ENCODE measurements at regions of chr6 and their contacts with region 1.

Region 1: DNA sequence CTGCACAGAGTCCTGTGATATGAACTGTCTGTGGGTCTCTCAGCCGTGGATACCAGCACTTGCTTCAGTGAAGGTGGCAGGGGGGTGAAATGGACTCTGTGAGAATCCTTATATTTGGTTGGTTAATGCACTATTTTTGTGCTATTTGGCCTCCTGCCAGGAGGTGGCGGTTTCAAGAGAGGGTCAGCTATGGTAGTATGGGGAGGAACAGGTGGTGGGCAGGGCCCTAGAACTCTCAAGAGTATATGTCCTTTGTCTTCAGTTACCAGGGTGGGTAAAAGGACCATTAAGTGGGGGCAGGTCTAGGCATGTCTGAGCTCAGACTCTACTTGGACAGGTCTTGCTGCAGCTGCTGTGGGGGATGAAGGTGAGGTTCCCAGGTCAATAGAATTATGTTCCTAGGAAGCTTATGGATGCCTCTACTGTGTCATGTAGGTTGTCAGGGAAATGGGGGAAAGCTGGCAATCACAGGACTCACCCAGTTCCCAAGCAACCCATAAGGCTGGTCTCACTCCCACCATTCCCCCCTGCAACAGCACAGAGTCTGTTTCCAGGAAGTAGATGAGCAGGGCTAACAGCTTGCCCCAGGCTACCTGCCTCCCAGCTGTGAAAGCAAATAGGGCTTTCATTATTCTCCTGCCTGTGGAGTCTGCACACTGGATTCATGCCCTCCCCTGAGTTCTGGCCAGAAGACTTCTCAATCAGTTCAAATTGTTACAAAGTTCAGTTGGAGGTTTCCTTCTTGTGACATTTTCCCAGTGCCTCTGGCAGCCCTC is 56.8 kb upstream of the PHIP start:
- DNase-seq: no peak
- H3K4me3 ChIP-seq: no peak overlapping the region
- CTCF ChIP-seq: no peak
- POLR2A ChIP-seq: no peak

Region 2: DNA sequence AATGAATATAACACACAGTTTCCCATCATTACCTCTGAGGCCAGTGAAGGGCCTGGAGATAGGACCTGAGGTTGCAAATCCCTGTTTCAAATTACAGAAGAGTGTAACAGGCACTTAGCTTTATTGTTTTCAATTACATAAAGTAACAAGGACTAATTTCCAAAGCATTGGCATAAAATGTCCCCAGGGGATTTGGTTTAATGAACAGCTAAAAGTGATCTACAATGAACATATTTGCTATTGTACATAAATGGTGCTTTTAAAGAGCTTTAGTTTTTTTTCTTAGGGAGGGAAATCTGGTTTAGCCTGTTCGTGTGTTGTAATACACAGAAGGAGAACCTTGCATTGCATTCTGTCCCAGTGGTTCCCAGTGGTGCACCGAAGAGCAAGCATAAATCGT is 45.2 kb after region 1 on chr6:
- intact Hi-C with region 1: no loop called
- DNase-seq: no peak
- H3K4me3 ChIP-seq: no peak overlapping the region
- CTCF ChIP-seq: no peak
- POLR2A ChIP-seq: no peak

Region 3: GRCh38 chr6:80348263-80348662 is 1213.4 kb after region 1 on chr6:
- intact Hi-C with region 1: loop called (anchors 5 kb)
- DNase-seq: no peak
- H3K4me3 ChIP-seq: no peak overlapping the region
- CTCF ChIP-seq: no peak
- POLR2A ChIP-seq: no peak

Measured in lower leg skin (tissue), 4 donors.